ENCODE measurements at regions of chr6 and their contacts with region 1.

Region 1: DNA sequence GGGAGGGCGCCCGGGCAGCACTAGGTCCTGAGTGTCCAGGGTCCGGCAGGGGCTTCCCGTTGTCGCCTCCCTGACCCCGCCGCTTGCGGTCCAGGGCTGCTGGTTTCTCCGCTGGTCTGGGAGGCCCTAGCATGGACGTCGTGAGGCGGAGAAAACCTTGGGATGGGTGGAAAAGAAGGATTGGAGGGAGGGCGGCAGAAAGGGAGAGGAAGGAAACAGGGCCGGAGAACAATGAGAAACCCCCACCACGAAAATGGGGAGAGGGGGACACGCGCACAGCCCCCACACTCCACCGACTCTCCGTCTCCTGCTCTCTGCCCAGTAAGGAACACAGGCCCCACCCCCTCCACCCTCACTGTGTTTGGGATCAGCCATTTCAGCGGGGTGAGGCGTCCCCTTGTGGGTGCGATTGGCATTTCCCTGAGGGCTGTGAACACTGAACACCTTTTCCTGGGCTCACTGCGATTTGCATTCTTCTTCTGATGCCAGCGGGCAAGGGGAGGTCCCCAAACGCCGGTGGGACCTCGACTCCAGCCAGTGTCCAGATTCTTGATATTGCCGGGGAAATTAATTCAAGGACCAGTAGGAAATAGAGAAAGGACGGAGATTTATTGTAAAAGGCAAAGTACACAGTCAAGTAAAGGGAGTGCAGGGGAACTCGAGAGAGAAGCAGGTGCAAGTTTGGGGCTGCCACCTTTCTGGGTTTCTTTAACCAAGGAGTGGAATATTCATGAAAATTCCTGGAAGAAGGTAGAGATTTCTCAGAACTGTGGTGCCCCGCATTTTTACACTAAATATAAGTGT is 3.3 kb upstream of the RAET1G start:
- DNase-seq: peak; percentile 80
- ATAC-seq: peak; percentile 81
- H3K4me3 ChIP-seq: peak overlapping the region; percentile 69
- H3K27ac ChIP-seq: no peak overlapping the region
- H3K4me1 ChIP-seq: peaks cover 8% of the 10 kb centered on the region; the same call in 1 of the 2 replicates
- H3K27me3 ChIP-seq: no peaks in the 10 kb centered on the region
- CTCF ChIP-seq: peak; percentile 75

Region 2: GRCh38 chr6:149545754-149546528 is 380.2 kb before region 1 on chr6 and contains the start of gene PPIL4:
- CTCF ChIA-PET with region 1: no interaction called
- POLR2A ChIA-PET with region 1: no interaction called
- intact Hi-C with region 1: loop called (anchors 10 kb)
- DNase-seq: peak; percentile 90
- ATAC-seq: peak; percentile 88
- H3K4me3 ChIP-seq: peak within 1 kb of the TSS; percentile 95
- H3K27ac ChIP-seq: peak within 1 kb of the TSS; percentile 90
- H3K4me1 ChIP-seq: peaks cover 12% of the 10 kb centered on the region
- H3K27me3 ChIP-seq: no peaks in the 10 kb centered on the region
- CTCF ChIP-seq: peak; percentile 90
- total RNA-seq, gene PPIL4: 11.1 and 12.8 TPM in 2 replicates

Region 3: GRCh38 chr6:149723771-149724417 is 202.3 kb before region 1 on chr6:
- CTCF ChIA-PET with region 1: no interaction called
- POLR2A ChIA-PET with region 1: no interaction called
- intact Hi-C with region 1: loop called (anchors 5 kb)
- DNase-seq: peak; percentile 76
- ATAC-seq: peak; percentile 98
- H3K4me3 ChIP-seq: no peak overlapping the region
- H3K27ac ChIP-seq: no peak overlapping the region
- H3K4me1 ChIP-seq: no peaks in the 10 kb centered on the region
- H3K27me3 ChIP-seq: no peaks in the 10 kb centered on the region
- CTCF ChIP-seq: peak; percentile 84

Region 4: GRCh38 chr6:149834513-149835481 is 91.4 kb before region 1 on chr6:
- CTCF ChIA-PET with region 1: no interaction called
- POLR2A ChIA-PET with region 1: no interaction called
- intact Hi-C with region 1: loop called (anchors 1 kb)
- DNase-seq: peak; percentile 79
- ATAC-seq: peak; percentile 83
- H3K4me3 ChIP-seq: no peak overlapping the region
- H3K27ac ChIP-seq: peak overlapping the region; percentile 31
- H3K4me1 ChIP-seq: peaks cover 17% of the 10 kb centered on the region
- H3K27me3 ChIP-seq: no peaks in the 10 kb centered on the region
- CTCF ChIP-seq: peak; percentile 93

Region 5: GRCh38 chr6:149863697-149864577 is 62.2 kb before region 1 on chr6 and contains the start of gene LRP11:
- CTCF ChIA-PET with region 1: no interaction called
- POLR2A ChIA-PET with region 1: no interaction called
- intact Hi-C with region 1: loop called (anchors 1 kb)
- DNase-seq: peak; percentile 88
- ATAC-seq: peak; percentile 77
- H3K4me3 ChIP-seq: peak within 1 kb of the TSS; percentile 79
- H3K27ac ChIP-seq: peak within 1 kb of the TSS; percentile 43
- H3K4me1 ChIP-seq: peaks cover 27% of the 10 kb centered on the region
- H3K27me3 ChIP-seq: no peaks in the 10 kb centered on the region
- CTCF ChIP-seq: no peak
- total RNA-seq, gene LRP11: 32.0 and 39.9 TPM in 2 replicates

Region 6: GRCh38 chr6:149884215-149884614 is 42.0 kb before region 1 on chr6:
- CTCF ChIA-PET with region 1: no interaction called
- POLR2A ChIA-PET with region 1: no interaction called
- intact Hi-C with region 1: no loop called
- DNase-seq: no peak
- ATAC-seq: no peak
- H3K4me3 ChIP-seq: no peak overlapping the region
- H3K27ac ChIP-seq: no peak overlapping the region
- H3K4me1 ChIP-seq: no peaks in the 10 kb centered on the region
- H3K27me3 ChIP-seq: no peaks in the 10 kb centered on the region
- CTCF ChIP-seq: no peak

Region 7: GRCh38 chr6:149965194-149966020 is 39.2 kb after region 1 on chr6:
- CTCF ChIA-PET with region 1: no interaction called
- POLR2A ChIA-PET with region 1: no interaction called
- intact Hi-C with region 1: no loop called
- DNase-seq: no peak
- ATAC-seq: no peak
- H3K4me3 ChIP-seq: no peak overlapping the region
- H3K27ac ChIP-seq: no peak overlapping the region
- H3K4me1 ChIP-seq: peaks cover 7% of the 10 kb centered on the region
- H3K27me3 ChIP-seq: no peaks in the 10 kb centered on the region
- CTCF ChIP-seq: no peak

Region 8: GRCh38 chr6:150016324-150017185 is 90.4 kb after region 1 on chr6:
- CTCF ChIA-PET with region 1: no interaction called
- POLR2A ChIA-PET with region 1: interaction called, 15 read pairs
- intact Hi-C with region 1: no loop called
- DNase-seq: peak; percentile 84
- ATAC-seq: peak; percentile 79
- H3K4me3 ChIP-seq: no peak overlapping the region
- H3K27ac ChIP-seq: no peak overlapping the region
- H3K4me1 ChIP-seq: no peaks in the 10 kb centered on the region
- H3K27me3 ChIP-seq: no peaks in the 10 kb centered on the region
- CTCF ChIP-seq: peak; percentile 52; the same call in 1 of the 2 replicates

Measured in PC-3 (cell line).